HEK293T (cell line): ENCODE measurements at regions of chr11 and their contacts with region 1.

Region 1: GRCh38 chr11:130434521-130435223 is 6.3 kb upstream of the ADAMTS8 start:
- DNase-seq: peak; percentile 69

Region 2: DNA sequence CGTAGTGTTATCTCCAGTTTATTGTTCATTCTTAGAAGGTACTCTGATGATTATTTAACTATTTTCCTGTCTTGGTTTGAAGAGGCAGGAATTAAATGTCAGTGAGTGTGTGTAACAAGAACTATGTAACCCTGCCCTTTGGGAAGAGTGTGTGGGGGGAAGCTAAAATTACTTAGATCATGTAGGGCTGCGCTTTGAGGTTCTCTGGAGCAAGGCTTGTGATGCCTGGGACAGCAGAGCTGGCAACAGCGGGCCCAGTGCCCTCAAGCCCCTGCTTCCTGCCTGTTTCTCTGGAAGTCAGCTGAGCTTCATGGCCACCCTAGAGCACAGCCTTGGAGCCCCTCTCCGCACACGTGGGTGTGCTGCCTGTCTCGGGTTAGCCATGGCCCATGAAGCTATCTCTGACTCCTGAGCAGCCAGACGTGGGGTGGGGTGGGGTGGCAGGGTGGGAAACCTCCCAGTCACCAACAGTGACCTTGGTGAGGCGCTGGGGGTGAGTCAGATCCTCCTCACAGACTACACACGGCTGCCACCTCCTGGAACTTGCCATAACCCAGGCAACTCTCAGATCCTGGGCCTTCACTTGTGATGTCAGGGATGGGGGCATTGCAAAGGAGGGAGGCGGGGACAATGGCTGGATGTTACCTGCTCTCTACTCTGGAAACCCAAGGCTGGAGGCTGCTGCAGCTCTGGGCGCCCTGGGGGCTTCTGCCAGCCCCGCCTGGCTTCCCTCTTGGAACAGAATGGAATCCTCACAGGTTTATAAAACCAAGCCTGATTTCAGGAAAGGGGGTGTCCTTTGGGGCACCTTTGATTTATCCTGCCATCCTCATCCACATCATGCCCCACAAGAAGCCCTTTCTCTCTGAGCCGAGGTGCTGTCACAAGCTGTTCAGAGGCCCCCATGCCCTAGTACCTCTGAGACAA is 393.0 kb after region 1 on chr11:
- CTCF ChIA-PET with region 1: interaction called, 14 read pairs
- POLR2A ChIA-PET with region 1: no interaction called
- DNase-seq: peak; percentile 52

Region 3: DNA sequence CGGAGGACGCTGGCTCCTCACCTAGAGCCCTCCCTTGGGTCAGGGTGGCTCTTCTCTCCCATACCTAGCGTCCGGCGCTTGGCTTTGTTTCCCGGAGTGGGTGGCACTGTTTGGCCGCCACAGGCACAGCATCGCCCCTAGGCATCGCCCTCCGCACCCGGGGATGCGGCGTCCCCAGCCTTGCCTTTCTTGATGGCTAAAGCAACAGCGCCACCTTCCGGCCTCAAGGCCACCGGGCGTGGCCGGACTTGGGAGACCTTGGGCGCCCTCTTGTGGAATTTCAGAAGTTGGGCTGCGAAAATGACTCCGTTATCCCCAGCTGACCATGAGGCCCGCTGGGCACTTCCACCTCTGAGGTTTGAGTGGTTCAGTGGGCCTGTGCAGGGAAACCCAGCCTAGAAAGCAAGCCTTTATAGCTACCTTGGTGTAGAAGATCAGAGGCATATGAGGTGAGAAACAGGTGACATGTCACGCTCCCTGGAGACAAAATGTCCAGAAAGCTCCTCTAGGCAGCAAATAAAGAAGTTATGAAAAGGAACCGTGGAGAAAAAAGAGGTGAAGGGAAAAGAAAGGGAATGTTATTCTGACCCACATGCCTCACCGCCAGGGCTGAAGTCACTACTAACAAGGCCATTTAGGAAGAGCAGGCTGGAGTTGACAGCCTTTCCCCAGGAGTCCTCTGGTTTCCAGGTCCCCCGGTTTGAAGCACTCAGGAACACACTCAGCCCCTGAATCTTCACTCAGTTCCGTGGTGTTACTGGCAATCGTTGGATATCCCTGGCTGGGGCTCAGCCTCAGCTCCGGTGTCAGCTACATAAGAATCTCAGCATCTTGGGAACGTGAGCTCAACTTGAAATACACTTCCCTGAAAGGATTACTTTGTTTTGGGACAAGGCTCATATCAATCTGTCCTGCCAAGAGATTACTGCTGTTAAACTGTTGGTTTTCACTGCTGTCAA is 427.5 kb after region 1 on chr11:
- CTCF ChIA-PET with region 1: interaction called, 25 read pairs
- POLR2A ChIA-PET with region 1: no interaction called
- DNase-seq: peak; percentile 83

Region 4: GRCh38 chr11:130894322-130895025 is 459.8 kb after region 1 on chr11:
- CTCF ChIA-PET with region 1: interaction called, 16 read pairs
- POLR2A ChIA-PET with region 1: no interaction called
- DNase-seq: peak; percentile 69